GM12878 (cell line): ENCODE measurements at regions of chr9 and their contacts with region 1.

Region 1: DNA sequence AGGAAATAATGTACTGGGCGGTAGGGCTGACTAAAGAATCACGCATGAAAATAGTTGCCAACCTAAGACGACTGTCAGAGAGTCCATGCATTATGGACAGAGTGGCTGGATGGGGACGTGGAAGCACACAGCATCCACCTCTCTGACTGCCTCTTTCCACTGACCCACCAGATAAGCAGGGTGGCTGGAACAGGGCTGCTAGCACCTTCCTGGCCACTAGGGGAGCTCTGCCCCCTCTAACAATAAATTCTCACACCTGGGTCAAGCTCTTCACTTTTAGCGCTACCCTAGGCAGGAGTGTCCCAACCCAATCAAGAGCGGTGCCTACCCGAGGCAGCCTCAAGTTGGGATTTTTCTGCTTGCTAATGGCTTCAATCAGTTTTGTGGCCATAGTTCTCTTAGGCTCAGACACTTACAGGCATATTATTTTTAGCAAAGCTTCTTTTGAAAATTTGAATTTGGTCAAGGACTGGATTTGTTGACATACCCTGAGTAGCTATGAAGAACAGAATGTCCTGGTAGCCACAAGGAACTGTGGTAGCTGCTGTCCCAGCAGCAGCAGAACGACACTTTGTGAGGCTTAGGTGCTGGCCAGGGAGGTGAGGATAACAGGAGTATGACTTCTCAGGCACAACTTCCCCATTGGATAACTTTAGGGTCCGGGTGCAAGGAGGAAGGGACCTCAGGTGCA is 6.9 kb upstream of the TPM2 start:
- DNase-seq: no peak
- ATAC-seq: peak; percentile 99
- H3K4me3 ChIP-seq: no peak overlapping the region
- H3K27ac ChIP-seq: no peak overlapping the region
- H3K4me1 ChIP-seq: no peaks in the 10 kb centered on the region
- H3K27me3 ChIP-seq: no peaks in the 10 kb centered on the region
- CTCF ChIP-seq: peak; percentile 78 to 98 (median 97)
- EP300 ChIP-seq: no peak
- POLR2A ChIP-seq: no peak
- RAD21 ChIP-seq: peak; percentile 61

Region 2: DNA sequence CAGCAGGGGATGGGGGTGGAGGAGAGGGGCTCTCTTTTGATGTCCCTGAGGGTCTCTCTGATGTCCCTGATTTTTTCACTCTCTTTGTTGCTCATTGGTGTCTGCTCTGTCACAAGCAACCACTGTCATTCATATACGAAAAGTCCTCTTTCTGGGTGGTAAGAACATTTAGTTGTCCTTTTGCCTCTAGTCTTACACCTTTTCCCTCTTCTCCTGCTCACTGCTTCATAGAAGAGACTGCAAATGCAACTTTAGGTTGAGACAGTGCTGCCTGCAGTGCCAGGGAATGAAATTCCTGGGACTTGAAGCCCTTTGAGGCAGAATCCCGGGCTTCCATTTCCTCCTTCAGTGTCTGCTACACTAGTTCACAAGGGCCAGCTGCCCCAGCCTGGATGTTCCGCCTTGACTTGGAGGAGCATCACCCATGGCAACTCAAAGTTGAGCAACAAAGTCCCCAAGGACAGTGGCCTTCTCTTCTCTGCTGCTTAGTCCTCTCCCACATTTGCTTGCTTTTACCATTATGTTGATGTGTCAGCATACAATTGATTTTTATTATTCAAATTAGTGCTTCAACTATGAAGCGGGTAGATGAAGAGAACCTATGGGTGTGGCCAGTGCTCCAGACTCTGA is 301.5 kb before region 1 on chr9:
- CTCF ChIA-PET with region 1: no interaction called
- POLR2A ChIA-PET with region 1: no interaction called
- RAD21 ChIA-PET with region 1: no interaction called
- SMC1A ChIA-PET with region 1: no interaction called
- in situ Hi-C with region 1: no loop called
- intact Hi-C with region 1: no loop called
- DNase-seq: no peak
- ATAC-seq: no peak
- H3K4me3 ChIP-seq: no peak overlapping the region
- H3K27ac ChIP-seq: no peak overlapping the region
- H3K4me1 ChIP-seq: no peaks in the 10 kb centered on the region
- H3K27me3 ChIP-seq: no peaks in the 10 kb centered on the region
- CTCF ChIP-seq: no peak
- EP300 ChIP-seq: no peak
- POLR2A ChIP-seq: no peak
- RAD21 ChIP-seq: no peak

Region 3: GRCh38 chr9:35526087-35526801 is 170.4 kb before region 1 on chr9:
- CTCF ChIA-PET with region 1: no interaction called
- POLR2A ChIA-PET with region 1: no interaction called
- RAD21 ChIA-PET with region 1: no interaction called
- SMC1A ChIA-PET with region 1: no interaction called
- in situ Hi-C with region 1: no loop called
- intact Hi-C with region 1: no loop called
- DNase-seq: no peak
- ATAC-seq: no peak
- H3K4me3 ChIP-seq: no peak overlapping the region
- H3K27ac ChIP-seq: no peak overlapping the region
- H3K4me1 ChIP-seq: no peaks in the 10 kb centered on the region
- H3K27me3 ChIP-seq: no peaks in the 10 kb centered on the region
- CTCF ChIP-seq: no peak
- EP300 ChIP-seq: no peak
- POLR2A ChIP-seq: no peak
- RAD21 ChIP-seq: no peak

Region 4: GRCh38 chr9:35603987-35604577 is 92.6 kb before region 1 on chr9:
- CTCF ChIA-PET with region 1: interaction called, 9 read pairs
- POLR2A ChIA-PET with region 1: no interaction called
- RAD21 ChIA-PET with region 1: interaction called, 14 read pairs
- SMC1A ChIA-PET with region 1: interaction called, 4 read pairs
- in situ Hi-C with region 1: no loop called
- intact Hi-C with region 1: loop called (anchors 1 kb)
- DNase-seq: peak; percentile 98
- ATAC-seq: peak; percentile 97
- H3K4me3 ChIP-seq: peak overlapping the region; percentile 77
- H3K27ac ChIP-seq: peak overlapping the region; percentile 73
- H3K4me1 ChIP-seq: peaks cover 8% of the 10 kb centered on the region
- H3K27me3 ChIP-seq: no peaks in the 10 kb centered on the region
- CTCF ChIP-seq: peak; percentile 81 to 98 (median 90)
- EP300 ChIP-seq: no peak
- POLR2A ChIP-seq: peak; percentile 81
- RAD21 ChIP-seq: peak; percentile 76

Region 5: DNA sequence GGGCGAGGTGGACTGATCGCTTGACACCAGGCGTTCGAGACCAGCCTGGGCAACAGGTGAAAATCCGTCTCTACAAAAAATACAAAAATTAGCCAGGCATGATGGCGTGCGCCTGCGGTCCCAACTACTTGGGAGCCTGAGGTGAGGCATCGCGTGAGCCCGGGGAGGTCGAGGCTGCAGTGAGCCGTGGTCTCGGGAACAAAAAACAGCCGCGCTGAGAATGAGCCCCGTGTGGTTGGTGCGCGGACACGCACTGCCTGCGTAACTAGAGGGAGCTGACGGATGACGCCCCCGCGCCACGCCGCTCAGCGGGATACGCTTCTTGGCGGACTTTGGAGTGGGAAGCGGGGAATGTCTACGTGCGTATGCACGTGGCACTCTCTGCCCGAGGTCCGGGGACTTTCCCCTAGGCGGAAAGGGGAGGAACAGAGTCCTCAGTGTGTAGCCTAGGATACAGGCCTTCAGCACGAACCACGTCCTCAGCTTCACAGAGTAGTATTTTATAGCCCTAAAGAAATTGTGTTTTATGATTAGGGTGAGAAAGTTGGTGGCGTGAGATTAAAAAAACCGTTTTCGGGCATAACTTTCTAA is 39.0 kb before region 1 on chr9 and contains the start of gene RMRP:
- CTCF ChIA-PET with region 1: interaction called, 227 read pairs
- POLR2A ChIA-PET with region 1: interaction called, 6 read pairs
- RAD21 ChIA-PET with region 1: interaction called, 13 read pairs
- SMC1A ChIA-PET with region 1: interaction called, 65 read pairs
- in situ Hi-C with region 1: no loop called
- intact Hi-C with region 1: no loop called
- DNase-seq: peak; percentile 96
- ATAC-seq: peak; percentile 93
- H3K4me3 ChIP-seq: peak within 1 kb of the TSS; percentile 85
- H3K27ac ChIP-seq: peak within 1 kb of the TSS; percentile 90
- H3K4me1 ChIP-seq: peaks cover 22% of the 10 kb centered on the region
- H3K27me3 ChIP-seq: no peaks in the 10 kb centered on the region
- CTCF ChIP-seq: no peak
- EP300 ChIP-seq: peak in 1 of 2 experiments; percentile 63; a peak in 3 of 4 replicates
- POLR2A ChIP-seq: no peak
- RAD21 ChIP-seq: no peak
- polyA plus RNA-seq, gene RMRP: not detected

Region 6: DNA sequence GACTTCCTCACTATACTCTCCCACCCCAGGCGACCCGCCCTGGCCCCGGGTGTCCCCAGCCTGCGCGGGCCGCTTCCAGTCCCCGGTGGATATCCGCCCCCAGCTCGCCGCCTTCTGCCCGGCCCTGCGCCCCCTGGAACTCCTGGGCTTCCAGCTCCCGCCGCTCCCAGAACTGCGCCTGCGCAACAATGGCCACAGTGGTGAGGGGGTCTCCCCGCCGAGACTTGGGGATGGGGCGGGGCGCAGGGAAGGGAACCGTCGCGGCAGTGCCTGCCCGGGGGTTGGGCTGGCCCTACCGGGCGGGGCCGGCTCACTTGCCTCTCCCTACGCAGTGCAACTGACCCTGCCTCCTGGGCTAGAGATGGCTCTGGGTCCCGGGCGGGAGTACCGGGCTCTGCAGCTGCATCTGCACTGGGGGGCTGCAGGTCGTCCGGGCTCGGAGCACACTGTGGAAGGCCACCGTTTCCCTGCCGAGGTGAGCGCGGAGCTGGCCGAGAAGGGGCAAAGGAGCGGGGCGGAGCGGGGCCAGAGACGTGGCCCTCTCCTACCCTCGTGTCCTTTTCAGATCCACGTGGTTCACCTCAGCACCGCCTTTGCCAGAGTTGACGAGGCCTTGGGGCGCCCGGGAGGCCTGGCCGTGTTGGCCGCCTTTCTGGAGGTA is 20.8 kb before region 1 on chr9:
- CTCF ChIA-PET with region 1: interaction called, 28 read pairs
- POLR2A ChIA-PET with region 1: no interaction called
- RAD21 ChIA-PET with region 1: interaction called, 4 read pairs
- SMC1A ChIA-PET with region 1: interaction called, 4 read pairs
- in situ Hi-C with region 1: no loop called
- intact Hi-C with region 1: no loop called
- DNase-seq: no peak
- ATAC-seq: peak; percentile 66
- H3K4me3 ChIP-seq: peak overlapping the region; percentile 22; the same call in 1 of the 2 replicates
- H3K27ac ChIP-seq: no peak overlapping the region
- H3K4me1 ChIP-seq: peaks cover 8% of the 10 kb centered on the region
- H3K27me3 ChIP-seq: peaks cover 3 to 7% of the 10 kb centered on the region in 2 experiments
- CTCF ChIP-seq: no peak
- EP300 ChIP-seq: no peak
- POLR2A ChIP-seq: no peak
- RAD21 ChIP-seq: no peak

Region 7: GRCh38 chr9:35748858-35749514 is 52.3 kb after region 1 on chr9 and contains the starts of genes GBA2 and RGP1:
- CTCF ChIA-PET with region 1: interaction called, 9 read pairs
- POLR2A ChIA-PET with region 1: interaction called, 3 read pairs
- RAD21 ChIA-PET with region 1: interaction called, 7 read pairs
- SMC1A ChIA-PET with region 1: interaction called, 12 read pairs
- in situ Hi-C with region 1: no loop called
- intact Hi-C with region 1: no loop called
- DNase-seq: no peak
- ATAC-seq: peak; percentile 93
- H3K4me3 ChIP-seq: peak within 1 kb of the TSS; percentile 99
- H3K27ac ChIP-seq: peak within 1 kb of the TSS; percentile 75
- H3K4me1 ChIP-seq: peaks cover 4% of the 10 kb centered on the region
- H3K27me3 ChIP-seq: no peaks in the 10 kb centered on the region
- CTCF ChIP-seq: no peak
- EP300 ChIP-seq: no peak
- POLR2A ChIP-seq: peak; percentile 76
- RAD21 ChIP-seq: no peak
- polyA plus RNA-seq, gene GBA2: 15.3 TPM
- polyA plus RNA-seq, gene RGP1: 0.44 to 0.89 TPM